Activated CD4-positive, alpha-beta memory T cell treated with anti-CD3 and anti-CD28 coated beads for 36 hours (primary cell): ENCODE measurements at regions of chr12 and their contacts with region 1.

Region 1: GRCh38 chr12:57462251-57462911 is 2.8 kb downstream of the GLI1 start:
- DNase-seq: peak; percentile 94
- H3K4me3 Mint-ChIP-seq: peak overlapping the region; percentile 80
- H3K27ac Mint-ChIP-seq: peak overlapping the region; percentile 40
- H3K4me1 Mint-ChIP-seq: peaks cover 44% of the 10 kb centered on the region
- H3K27me3 Mint-ChIP-seq: peaks cover 4% of the 10 kb centered on the region

Region 2: DNA sequence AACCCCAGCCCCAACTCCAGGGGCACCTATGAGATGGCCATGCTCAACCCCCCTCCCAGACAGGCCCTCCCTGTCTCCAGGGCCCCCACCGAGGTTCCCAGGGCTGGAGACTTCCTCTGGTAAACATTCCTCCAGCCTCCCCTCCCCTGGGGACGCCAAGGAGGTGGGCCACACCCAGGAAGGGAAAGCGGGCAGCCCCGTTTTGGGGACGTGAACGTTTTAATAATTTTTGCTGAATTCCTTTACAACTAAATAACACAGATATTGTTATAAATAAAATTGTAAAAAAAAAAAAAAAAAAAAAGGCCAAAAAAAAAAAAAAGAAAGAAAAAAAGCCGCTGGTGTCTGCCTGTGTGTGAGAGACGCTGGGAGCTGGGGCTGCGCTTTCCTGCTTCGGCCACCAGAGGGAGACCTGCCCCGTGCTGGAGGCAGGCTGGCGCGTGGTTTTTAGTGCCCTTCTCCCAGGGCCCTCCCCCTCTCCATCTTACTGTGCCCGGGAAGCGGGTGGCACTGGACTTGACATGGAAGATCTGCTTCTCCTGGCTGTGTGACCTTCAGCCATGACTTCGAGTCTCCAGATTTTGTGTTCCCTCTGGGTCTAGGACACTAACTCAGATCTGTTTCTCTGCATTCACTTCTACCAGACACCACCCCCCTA is 249.2 kb before region 1 on chr12:
- CTCF ChIA-PET with region 1: interaction called, 17 read pairs
- POLR2A ChIA-PET with region 1: no interaction called
- intact Hi-C with region 1: loop called (anchors 1 kb)
- DNase-seq: peak; percentile 90
- H3K4me3 Mint-ChIP-seq: no peak overlapping the region
- H3K27ac Mint-ChIP-seq: no peak overlapping the region
- H3K4me1 Mint-ChIP-seq: peaks cover 31% of the 10 kb centered on the region
- H3K27me3 Mint-ChIP-seq: peaks cover 40% of the 10 kb centered on the region

Region 3: DNA sequence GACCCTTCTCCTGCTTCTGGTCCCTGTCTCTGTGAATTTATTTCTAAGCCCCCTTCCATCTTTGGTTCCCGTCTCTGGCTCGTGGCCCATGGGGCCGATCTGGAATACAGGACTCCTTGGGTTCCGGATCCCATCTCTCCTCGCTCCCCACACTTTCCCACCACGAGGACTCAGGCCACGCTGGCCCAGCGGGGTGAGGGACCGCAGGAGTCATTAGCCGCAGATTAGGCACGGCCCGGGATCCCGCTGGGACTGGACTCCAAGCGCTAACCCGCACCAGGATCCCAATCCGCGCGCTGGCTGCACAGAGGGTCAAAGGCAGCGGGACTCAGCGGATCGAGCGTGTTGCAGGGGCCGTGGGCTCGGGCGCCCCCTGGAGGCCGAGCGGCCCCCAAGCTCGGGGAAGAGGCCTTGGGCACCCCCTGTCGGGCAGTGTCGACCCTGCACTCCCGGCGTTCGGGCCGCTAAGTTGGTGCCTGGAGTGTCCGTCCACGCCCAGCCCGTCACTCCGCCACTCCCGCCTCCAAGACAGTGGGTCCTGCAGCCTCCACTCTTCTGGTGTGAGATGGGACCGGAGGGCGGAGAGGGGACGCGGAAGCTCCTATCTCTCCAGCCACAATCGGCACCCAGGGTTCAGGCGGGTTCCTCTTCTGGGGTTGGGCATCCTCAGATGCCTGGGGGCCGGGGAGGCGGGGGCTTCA is 223.4 kb before region 1 on chr12:
- CTCF ChIA-PET with region 1: interaction called, 11 read pairs
- POLR2A ChIA-PET with region 1: no interaction called
- intact Hi-C with region 1: no loop called
- DNase-seq: peak; percentile 93
- H3K4me3 Mint-ChIP-seq: peak overlapping the region; percentile 82
- H3K27ac Mint-ChIP-seq: no peak overlapping the region
- H3K4me1 Mint-ChIP-seq: peaks cover 60% of the 10 kb centered on the region
- H3K27me3 Mint-ChIP-seq: peaks cover 39% of the 10 kb centered on the region

Region 4: DNA sequence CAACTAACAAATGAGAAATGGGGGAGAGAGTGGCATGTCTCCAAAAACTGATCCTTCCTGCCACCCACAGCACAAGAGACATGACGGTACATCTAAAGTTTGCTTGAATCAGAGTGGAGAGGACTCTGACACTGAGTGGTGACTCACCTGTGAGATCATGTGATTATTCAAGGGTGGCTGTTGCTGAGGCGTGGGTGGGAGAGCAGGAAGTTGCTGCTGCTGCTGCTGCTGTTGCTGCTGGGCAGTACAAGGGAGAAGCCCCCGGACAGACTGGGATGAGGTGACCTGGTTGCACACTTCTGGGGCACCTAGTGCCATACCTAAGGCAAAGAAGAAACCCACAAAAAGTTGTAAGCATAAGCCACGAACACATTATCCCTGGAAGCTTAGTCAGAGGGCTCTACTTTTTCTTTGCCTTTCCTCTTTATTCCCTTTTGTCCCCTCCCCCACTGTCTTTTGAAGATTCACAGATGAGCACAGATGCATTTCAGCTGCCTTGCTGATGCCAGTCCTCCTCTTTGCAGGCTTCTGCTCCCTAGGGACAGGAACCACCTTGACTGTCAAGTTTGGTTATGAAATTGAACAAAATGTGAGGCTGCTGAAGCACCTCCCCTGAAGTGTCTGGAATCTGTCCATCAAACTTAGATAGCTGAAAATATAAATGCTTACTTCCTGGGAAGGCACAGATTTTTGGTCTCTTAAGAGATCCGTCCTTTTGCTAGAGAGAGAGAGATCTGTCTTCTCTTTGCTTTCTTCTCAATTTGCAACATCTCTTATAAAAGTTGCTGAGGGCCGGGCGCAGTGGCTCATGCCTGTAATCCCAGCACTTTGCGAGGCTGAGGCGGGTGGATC is 181.9 kb before region 1 on chr12:
- CTCF ChIA-PET with region 1: interaction called, 3 read pairs
- POLR2A ChIA-PET with region 1: no interaction called
- intact Hi-C with region 1: loop called (anchors 1 kb)
- DNase-seq: peak; percentile 89
- H3K4me3 Mint-ChIP-seq: peak overlapping the region; percentile 71
- H3K27ac Mint-ChIP-seq: peak overlapping the region; percentile 96
- H3K4me1 Mint-ChIP-seq: peaks cover 16% of the 10 kb centered on the region
- H3K27me3 Mint-ChIP-seq: no peaks in the 10 kb centered on the region

Region 5: DNA sequence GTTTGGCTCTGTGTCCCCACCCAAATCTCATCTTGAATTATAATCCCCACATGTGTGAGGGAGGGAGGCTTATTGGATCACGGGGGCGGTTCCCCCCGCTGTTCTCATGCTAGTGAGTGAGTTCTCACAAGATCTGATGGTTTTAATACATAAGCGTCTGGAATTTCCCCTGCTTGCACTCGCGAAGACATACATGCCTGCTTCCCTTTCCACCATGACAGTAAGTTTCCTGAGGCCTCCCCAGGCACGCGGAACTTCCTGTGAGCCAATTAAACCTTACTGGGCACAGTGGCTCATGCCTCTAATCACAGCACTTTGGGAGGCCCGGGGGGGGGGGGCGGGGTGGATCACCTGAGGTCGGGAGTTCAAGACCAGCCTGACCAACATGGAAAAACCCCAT is 92.3 kb before region 1 on chr12:
- CTCF ChIA-PET with region 1: no interaction called
- POLR2A ChIA-PET with region 1: no interaction called
- intact Hi-C with region 1: no loop called
- DNase-seq: no peak
- H3K4me3 Mint-ChIP-seq: no peak overlapping the region
- H3K27ac Mint-ChIP-seq: no peak overlapping the region
- H3K4me1 Mint-ChIP-seq: peaks cover 3% of the 10 kb centered on the region
- H3K27me3 Mint-ChIP-seq: no peaks in the 10 kb centered on the region

Region 6: GRCh38 chr12:57430931-57431720 is 31.3 kb before region 1 on chr12 and contains the start of gene R3HDM2:
- CTCF ChIA-PET with region 1: interaction called, 11 read pairs
- POLR2A ChIA-PET with region 1: interaction called, 3 read pairs
- intact Hi-C with region 1: no loop called
- DNase-seq: peak; percentile 97
- H3K4me3 Mint-ChIP-seq: peak within 1 kb of the TSS; percentile 97
- H3K27ac Mint-ChIP-seq: peak within 1 kb of the TSS; percentile 99
- H3K4me1 Mint-ChIP-seq: peaks cover 37% of the 10 kb centered on the region
- H3K27me3 Mint-ChIP-seq: no peaks in the 10 kb centered on the region
- total RNA-seq, gene R3HDM2: 42.2 to 51.4 TPM

Region 7: DNA sequence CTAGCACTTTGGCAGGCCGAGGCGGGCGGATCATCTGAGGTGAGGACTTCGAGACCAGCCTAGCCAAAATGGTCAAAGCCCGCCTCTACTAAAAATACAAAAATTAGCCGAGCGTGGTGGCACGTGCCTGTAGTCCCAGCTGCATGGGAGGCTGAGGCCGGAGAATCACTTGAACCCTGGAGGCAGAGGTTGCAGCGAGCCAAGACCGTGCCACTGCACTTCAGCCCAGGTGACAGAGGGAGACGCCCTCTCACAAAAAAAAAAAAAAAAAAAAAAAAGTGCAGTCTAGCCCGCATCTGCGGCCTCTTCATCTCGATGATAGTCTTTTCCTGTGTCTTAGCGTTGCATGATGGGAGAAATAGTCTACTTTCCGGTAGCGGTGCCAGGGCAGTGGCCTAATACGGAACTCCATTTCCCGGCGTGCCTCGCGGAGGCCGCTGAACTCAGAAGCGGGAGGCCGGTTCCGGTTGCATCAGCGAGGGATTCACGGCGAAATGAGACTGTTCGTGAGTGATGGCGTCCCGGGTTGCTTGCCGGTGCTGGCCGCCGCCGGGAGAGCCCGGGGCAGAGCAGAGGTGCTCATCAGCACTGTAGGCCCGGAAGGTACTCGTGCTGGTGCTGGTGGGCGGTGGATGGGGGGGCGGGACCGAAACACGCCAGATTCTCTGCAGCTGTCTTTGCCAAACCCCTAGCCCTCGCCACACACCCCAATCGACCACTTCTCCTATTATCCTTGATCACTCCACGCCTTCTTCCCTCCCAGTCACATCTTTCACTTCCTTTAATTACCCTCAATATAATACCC is 25.4 kb after region 1 on chr12 and contains the start of gene MARS1:
- CTCF ChIA-PET with region 1: interaction called, 12 read pairs
- POLR2A ChIA-PET with region 1: no interaction called
- intact Hi-C with region 1: no loop called
- DNase-seq: peak; percentile 96
- H3K4me3 Mint-ChIP-seq: peak within 1 kb of the TSS; percentile 97
- H3K27ac Mint-ChIP-seq: peak within 1 kb of the TSS; percentile 94
- H3K4me1 Mint-ChIP-seq: peaks cover 40% of the 10 kb centered on the region
- H3K27me3 Mint-ChIP-seq: no peaks in the 10 kb centered on the region
- total RNA-seq, gene MARS1: 354 to 364 TPM

Region 8: DNA sequence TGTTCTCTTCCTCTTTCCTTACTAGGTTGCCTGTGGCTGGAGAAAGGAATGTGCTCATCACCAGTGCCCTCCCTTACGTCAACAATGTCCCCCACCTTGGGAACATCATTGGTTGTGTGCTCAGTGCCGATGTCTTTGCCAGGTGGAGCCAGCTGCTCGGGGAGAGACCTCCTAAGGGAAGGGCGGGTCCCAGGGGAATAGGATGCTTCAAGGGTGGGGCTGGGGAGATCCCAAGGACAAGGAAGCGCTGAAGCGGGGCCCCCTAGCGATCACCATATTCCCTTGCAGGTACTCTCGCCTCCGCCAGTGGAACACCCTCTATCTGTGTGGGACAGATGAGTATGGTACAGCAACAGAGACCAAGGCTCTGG is 35.7 kb after region 1 on chr12:
- CTCF ChIA-PET with region 1: no interaction called
- POLR2A ChIA-PET with region 1: no interaction called
- intact Hi-C with region 1: no loop called
- DNase-seq: no peak
- H3K4me3 Mint-ChIP-seq: no peak overlapping the region
- H3K27ac Mint-ChIP-seq: no peak overlapping the region
- H3K4me1 Mint-ChIP-seq: peaks cover 7% of the 10 kb centered on the region
- H3K27me3 Mint-ChIP-seq: no peaks in the 10 kb centered on the region

Region 9: GRCh38 chr12:57621497-57622292 is 159.3 kb after region 1 on chr12:
- CTCF ChIA-PET with region 1: interaction called, 7 read pairs
- POLR2A ChIA-PET with region 1: no interaction called
- intact Hi-C with region 1: loop called (anchors 5 kb)
- DNase-seq: peak; percentile 68
- H3K4me3 Mint-ChIP-seq: peak overlapping the region; percentile 63
- H3K27ac Mint-ChIP-seq: no peak overlapping the region
- H3K4me1 Mint-ChIP-seq: peaks cover 24% of the 10 kb centered on the region
- H3K27me3 Mint-ChIP-seq: peaks cover 88% of the 10 kb centered on the region